Right cardiac atrium (tissue), 5 donors: ENCODE measurements at regions of chr7 and their contacts with region 1.

Region 1: GRCh38 chr7:90155206-90155605 is 937 bp downstream of the STEAP1 start:
- DNase-seq: no peak
- ATAC-seq: no peak
- H3K4me3 ChIP-seq: no peak overlapping the region
- H3K27ac ChIP-seq: no peak overlapping the region
- H3K4me1 ChIP-seq: no peaks in the 10 kb centered on the region
- H3K27me3 ChIP-seq: no peaks in the 10 kb centered on the region

Region 2: GRCh38 chr7:90244909-90245851 is 90.0 kb after region 1 on chr7 and contains the start of gene CFAP69:
- intact Hi-C with region 1: loop called in 1 of 4 experiments (anchors 10 kb)
- DNase-seq: peak; percentile 92 to 97 (median 96)
- ATAC-seq: peak; percentile 96 to 98
- H3K4me3 ChIP-seq: peak within 1 kb of the TSS; percentile 65
- H3K27ac ChIP-seq: no peak within 1 kb of the TSS
- H3K4me1 ChIP-seq: no peaks in the 10 kb centered on the region
- H3K27me3 ChIP-seq: no peaks in the 10 kb centered on the region
- total RNA-seq, gene CFAP69: 3.5 to 7.4 (median 4.5) TPM

Region 3: DNA sequence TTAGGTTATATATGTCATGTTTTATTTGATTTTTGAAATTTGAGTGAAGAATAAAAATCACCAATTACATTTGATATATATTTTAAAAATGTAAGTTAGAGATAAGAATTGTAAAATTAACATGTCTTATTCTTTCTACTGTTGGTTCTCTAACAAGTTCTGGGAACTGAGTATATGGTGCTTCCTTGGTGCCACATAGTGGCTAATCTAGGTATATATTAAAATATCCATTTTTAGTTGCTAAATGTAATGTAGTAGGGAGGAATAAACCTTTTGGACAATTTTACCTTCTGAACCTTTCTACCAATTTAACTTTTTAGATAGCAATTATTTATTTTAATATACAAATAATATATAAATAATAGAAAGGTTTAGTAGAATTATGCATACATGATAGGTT is 107.2 kb after region 1 on chr7:
- intact Hi-C with region 1: loop called in 2 of 4 experiments (anchors 5 to 10 kb)
- DNase-seq: no peak
- ATAC-seq: peak; percentile 61 to 71
- H3K4me3 ChIP-seq: no peak overlapping the region
- H3K27ac ChIP-seq: no peak overlapping the region
- H3K4me1 ChIP-seq: no peaks in the 10 kb centered on the region
- H3K27me3 ChIP-seq: no peaks in the 10 kb centered on the region

Region 4: GRCh38 chr7:90288154-90288553 is 132.9 kb after region 1 on chr7:
- intact Hi-C with region 1: loop called in 1 of 4 experiments (anchors 10 kb)
- DNase-seq: no peak
- ATAC-seq: no peak
- H3K4me3 ChIP-seq: no peak overlapping the region
- H3K27ac ChIP-seq: no peak overlapping the region
- H3K4me1 ChIP-seq: no peaks in the 10 kb centered on the region
- H3K27me3 ChIP-seq: no peaks in the 10 kb centered on the region

Region 5: DNA sequence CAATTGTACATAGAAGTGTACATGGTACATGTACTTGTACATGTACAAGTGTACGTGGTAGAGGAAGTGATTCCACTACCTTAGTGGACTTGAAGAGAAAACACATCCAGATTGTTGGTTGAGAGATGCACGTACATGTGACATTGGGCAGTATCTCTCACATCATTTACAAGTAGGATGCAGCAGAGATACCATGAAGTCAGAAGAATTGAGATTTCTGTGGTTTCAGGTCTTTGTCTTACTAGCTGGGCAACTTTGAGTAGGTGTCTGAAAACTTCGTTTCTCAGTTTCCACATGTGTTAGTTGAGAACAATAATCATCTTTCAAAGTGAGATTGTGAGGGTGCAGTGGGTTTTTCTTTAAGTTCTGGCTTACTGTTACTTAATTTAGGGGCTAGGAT is 269.5 kb after region 1 on chr7:
- intact Hi-C with region 1: loop called in 1 of 4 experiments (anchors 10 kb)
- DNase-seq: no peak
- ATAC-seq: no peak
- H3K4me3 ChIP-seq: no peak overlapping the region
- H3K27ac ChIP-seq: no peak overlapping the region
- H3K4me1 ChIP-seq: peaks cover 5% of the 10 kb centered on the region
- H3K27me3 ChIP-seq: no peaks in the 10 kb centered on the region